CD4-positive, alpha-beta memory T cell (primary cell): ENCODE measurements at regions of chr11 and their contacts with region 1.

Region 1: GRCh38 chr11:554824-555472 is 5.6 kb downstream of the LMNTD2 start:
- DNase-seq: peak; percentile 72 to 77 (median 74)
- H3K4me3 ChIP-seq: peak overlapping the region in 1 of 2 donors; percentile 43
- H3K4me3 Mint-ChIP-seq: peak overlapping the region in 6 of 8 donors; percentile 13 to 68 (median 58)
- H3K27ac ChIP-seq: peak overlapping the region; percentile 21
- H3K27ac Mint-ChIP-seq: peak overlapping the region in 1 of 7 donors; percentile 46
- H3K4me1 ChIP-seq: peaks cover 16% of the 10 kb centered on the region
- H3K4me1 Mint-ChIP-seq: peaks cover 3 to 12% (median 4%) of the 10 kb centered on the region in 4 donors
- H3K27me3 ChIP-seq: no peaks in the 10 kb centered on the region
- H3K27me3 Mint-ChIP-seq: no peaks in the 10 kb centered on the region

Region 2: DNA sequence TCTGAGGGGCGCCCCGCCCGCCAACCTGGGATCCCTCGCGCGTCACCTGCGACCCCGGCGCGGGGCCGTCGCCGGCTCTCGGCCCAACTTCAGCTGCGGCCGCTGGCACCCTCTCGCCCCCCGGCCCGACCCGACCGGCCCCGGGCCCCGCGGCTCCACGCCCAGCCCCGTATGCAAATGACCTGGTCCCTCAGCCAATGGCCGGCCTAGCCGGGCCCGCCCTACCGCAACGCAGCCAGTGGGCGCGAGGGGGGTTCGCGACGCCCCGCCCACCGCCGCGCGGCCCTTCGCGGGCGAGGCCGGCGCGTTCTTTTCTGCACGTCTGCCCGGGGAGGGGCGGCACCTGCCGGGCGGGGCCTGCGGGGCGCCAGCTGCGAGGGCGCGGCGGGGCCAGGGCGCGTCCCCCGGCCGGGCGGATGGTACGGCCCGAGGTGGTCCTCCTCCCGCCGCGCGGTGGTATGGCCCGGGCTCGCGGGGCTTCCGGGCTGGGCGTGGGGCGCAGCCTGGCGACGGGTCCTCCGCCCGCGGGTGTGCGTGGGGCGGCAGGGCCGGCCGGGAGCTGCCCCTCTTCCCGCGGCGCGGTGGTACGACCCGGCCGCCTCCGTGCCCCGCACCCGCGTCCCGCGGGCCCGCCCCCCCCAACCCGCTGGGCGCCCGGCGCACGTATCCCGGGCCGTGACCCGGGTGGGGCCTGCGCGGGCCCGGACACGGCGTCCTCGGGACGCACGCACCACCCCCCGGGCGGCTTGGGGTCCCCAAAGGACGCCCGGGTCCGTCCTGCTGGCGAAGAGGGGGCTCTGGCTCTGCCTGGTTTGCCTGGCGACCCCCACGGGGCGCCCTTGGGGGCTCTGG is 13.6 kb after region 1 on chr11:
- CTCF ChIA-PET with region 1: interaction called, 10 read pairs
- POLR2A ChIA-PET with region 1: interaction called, 62 read pairs
- intact Hi-C with region 1: loop called (anchors 1 kb)
- DNase-seq: peak; percentile 90 to 97 (median 95)
- H3K4me3 ChIP-seq: peak overlapping the region in 1 of 2 donors; percentile 58
- H3K4me3 Mint-ChIP-seq: peak overlapping the region; percentile 70 to 85 (median 76)
- H3K27ac ChIP-seq: peak overlapping the region; percentile 48
- H3K27ac Mint-ChIP-seq: no peak overlapping the region
- H3K4me1 ChIP-seq: peaks cover 15% of the 10 kb centered on the region
- H3K4me1 Mint-ChIP-seq: peaks cover 0 to 6% (median 5%) of the 10 kb centered on the region in 4 donors
- H3K27me3 ChIP-seq: no peaks in the 10 kb centered on the region
- H3K27me3 Mint-ChIP-seq: no peaks in the 10 kb centered on the region

Region 3: DNA sequence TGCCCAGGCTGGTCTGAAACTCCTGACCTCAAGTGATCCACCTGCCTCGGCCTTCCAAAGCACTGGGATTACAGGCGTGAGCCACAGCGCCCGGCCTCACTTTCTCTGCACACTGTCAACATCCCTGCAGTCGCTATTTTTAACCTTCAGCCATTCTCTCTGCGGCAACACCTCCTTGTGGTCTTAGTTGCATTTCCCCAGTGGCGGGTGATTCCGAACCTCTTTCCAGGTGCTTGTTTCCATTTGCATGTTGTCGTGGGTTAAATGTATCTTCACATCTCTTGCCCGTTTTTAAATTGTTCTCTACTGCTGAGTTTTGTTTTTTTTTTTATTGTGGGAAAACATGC is 74.3 kb after region 1 on chr11:
- CTCF ChIA-PET with region 1: interaction called, 7 read pairs
- POLR2A ChIA-PET with region 1: no interaction called
- intact Hi-C with region 1: loop called (anchors 1 kb)
- DNase-seq: peak in 1 of 5 donors; percentile 39
- H3K4me3 ChIP-seq: no peak overlapping the region
- H3K4me3 Mint-ChIP-seq: peak overlapping the region; percentile 14 to 71 (median 50)
- H3K27ac ChIP-seq: no peak overlapping the region
- H3K27ac Mint-ChIP-seq: peak overlapping the region in 1 of 7 donors; percentile 72
- H3K4me1 ChIP-seq: peaks cover 15% of the 10 kb centered on the region
- H3K4me1 Mint-ChIP-seq: peaks cover 14 to 23% (median 17%) of the 10 kb centered on the region in 4 donors
- H3K27me3 ChIP-seq: no peaks in the 10 kb centered on the region
- H3K27me3 Mint-ChIP-seq: peaks cover 12 to 14% of the 10 kb centered on the region in 2 donors

Region 4: GRCh38 chr11:765025-765801 is 210.3 kb after region 1 on chr11:
- CTCF ChIA-PET with region 1: interaction called, 6 read pairs
- POLR2A ChIA-PET with region 1: interaction called, 5 read pairs
- intact Hi-C with region 1: loop called (anchors 1 kb)
- DNase-seq: peak; percentile 61 to 67 (median 63)
- H3K4me3 ChIP-seq: no peak overlapping the region
- H3K4me3 Mint-ChIP-seq: no peak overlapping the region
- H3K27ac ChIP-seq: no peak overlapping the region
- H3K27ac Mint-ChIP-seq: peak overlapping the region in 5 of 7 donors; percentile 55 to 81 (median 75)
- H3K4me1 ChIP-seq: no peaks in the 10 kb centered on the region
- H3K4me1 Mint-ChIP-seq: no peaks in the 10 kb centered on the region
- H3K27me3 ChIP-seq: no peaks in the 10 kb centered on the region
- H3K27me3 Mint-ChIP-seq: no peaks in the 10 kb centered on the region